Activated naive CD4-positive, alpha-beta T cell treated with anti-CD3 and anti-CD28 coated beads for 36 hours (primary cell): ENCODE measurements at regions of chr15 and their contacts with region 1.

Region 1: GRCh38 chr15:61621146-61621545 is 392.0 kb upstream of the RORA start:
- DNase-seq: peak; percentile 32
- H3K4me3 Mint-ChIP-seq: no peak overlapping the region
- H3K27ac Mint-ChIP-seq: no peak overlapping the region
- H3K4me1 Mint-ChIP-seq: no peaks in the 10 kb centered on the region
- H3K27me3 Mint-ChIP-seq: peaks cover 11% of the 10 kb centered on the region

Region 2: GRCh38 chr15:61169904-61170695 is 451.0 kb before region 1 on chr15:
- CTCF ChIA-PET with region 1: interaction called, 4 read pairs
- intact Hi-C with region 1: loop called (anchors 2 kb)
- DNase-seq: peak; percentile 46
- H3K4me3 Mint-ChIP-seq: no peak overlapping the region
- H3K27ac Mint-ChIP-seq: no peak overlapping the region
- H3K4me1 Mint-ChIP-seq: peaks cover 18% of the 10 kb centered on the region
- H3K27me3 Mint-ChIP-seq: no peaks in the 10 kb centered on the region

Region 3: DNA sequence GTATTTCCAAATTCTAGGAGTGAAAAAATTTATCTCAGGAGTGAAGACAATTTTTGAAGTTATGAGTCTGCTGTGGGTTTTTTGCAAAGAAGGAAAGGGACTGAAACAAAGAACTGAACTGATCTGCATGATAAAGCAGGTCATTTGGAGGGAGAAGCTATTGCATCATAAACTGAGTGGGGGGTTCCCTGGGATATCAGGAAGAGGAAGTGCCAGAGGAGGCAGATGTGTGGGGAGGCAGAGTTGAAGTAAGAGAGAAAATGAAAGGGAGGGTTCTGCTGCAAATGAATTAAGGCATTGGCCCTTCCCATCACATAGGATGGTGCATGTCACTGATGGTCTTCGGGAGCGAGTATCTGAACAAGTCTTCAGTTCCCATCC is 59.9 kb after region 1 on chr15:
- CTCF ChIA-PET with region 1: no interaction called
- intact Hi-C with region 1: no loop called
- DNase-seq: no peak
- H3K4me3 Mint-ChIP-seq: no peak overlapping the region
- H3K27ac Mint-ChIP-seq: no peak overlapping the region
- H3K4me1 Mint-ChIP-seq: no peaks in the 10 kb centered on the region
- H3K27me3 Mint-ChIP-seq: peaks cover 13% of the 10 kb centered on the region